AG04450 (cell line): ENCODE measurements at regions of chr19 and their contacts with region 1.

Region 1: DNA sequence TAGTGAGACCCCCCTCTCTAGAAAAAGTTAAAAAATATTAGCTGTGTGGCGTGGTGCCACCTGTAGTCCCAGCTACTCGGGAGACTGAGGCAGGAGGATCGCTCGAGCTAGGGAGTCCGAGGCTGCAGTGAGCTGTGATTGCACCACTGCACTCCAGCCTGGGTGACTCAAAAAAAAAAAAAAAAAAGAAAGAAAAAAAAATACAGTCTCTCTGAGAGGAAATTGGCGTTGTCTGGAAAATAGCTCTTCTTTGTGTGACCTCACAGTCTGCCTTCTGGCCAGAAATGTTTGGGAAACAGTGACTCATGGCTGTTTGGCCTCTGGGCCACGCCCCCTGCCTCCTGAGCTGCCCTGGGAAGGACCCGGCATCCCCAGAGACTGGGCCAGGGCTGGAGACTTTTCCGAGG is 10.7 kb downstream of the MARCHF2 start:
- DNase-seq: peak; percentile 85
- H3K4me3 ChIP-seq: no peak overlapping the region
- H3K27ac ChIP-seq: no peak overlapping the region
- H3K27me3 ChIP-seq: no peaks in the 10 kb centered on the region
- CTCF ChIP-seq: no peak

Region 2: GRCh38 chr19:8404391-8405151 is 19.2 kb before region 1 on chr19:
- CTCF ChIA-PET with region 1: interaction called, 8 read pairs
- POLR2A ChIA-PET with region 1: interaction called, 12 read pairs
- DNase-seq: no peak
- H3K4me3 ChIP-seq: no peak overlapping the region
- H3K27ac ChIP-seq: no peak overlapping the region
- H3K27me3 ChIP-seq: no peaks in the 10 kb centered on the region
- CTCF ChIP-seq: no peak

Region 3: DNA sequence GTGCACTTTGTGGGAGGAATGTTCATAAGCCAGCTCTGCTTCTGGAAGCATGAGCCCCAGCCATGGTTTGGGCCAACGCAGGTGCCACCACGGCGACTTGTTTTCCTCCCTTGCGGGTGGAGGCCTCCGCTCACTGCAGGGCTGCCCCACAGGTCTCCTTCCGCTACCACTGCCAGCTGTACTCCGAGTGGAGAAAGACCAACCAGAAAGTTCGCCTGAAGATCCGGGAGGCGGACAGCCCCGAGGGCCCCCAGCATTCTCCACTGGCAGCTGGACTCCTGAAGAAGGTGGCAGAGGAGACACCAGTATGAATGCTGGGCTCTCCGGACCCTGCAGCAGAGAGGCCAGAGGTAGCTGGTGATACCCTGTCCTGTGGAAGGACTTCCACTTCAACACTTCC is 14.4 kb after region 1 on chr19:
- CTCF ChIA-PET with region 1: no interaction called
- POLR2A ChIA-PET with region 1: interaction called, 10 read pairs
- DNase-seq: no peak
- H3K4me3 ChIP-seq: no peak overlapping the region
- H3K27ac ChIP-seq: no peak overlapping the region
- H3K27me3 ChIP-seq: no peaks in the 10 kb centered on the region
- CTCF ChIP-seq: no peak